ENCODE measurements at regions of chr1 and their contacts with region 1.

Region 1: GRCh38 chr1:22490309-22490708 is 38.7 kb downstream of the ZBTB40 start:
- DNase-seq: no peak
- ATAC-seq: no peak
- H3K4me3 ChIP-seq: no peak overlapping the region
- H3K27ac ChIP-seq: no peak overlapping the region
- H3K4me1 ChIP-seq: peaks cover 0 to 57% (median 38%) of the 10 kb centered on the region in 9 donors
- H3K27me3 ChIP-seq: no peaks in the 10 kb centered on the region
- CTCF ChIP-seq: no peak

Region 2: DNA sequence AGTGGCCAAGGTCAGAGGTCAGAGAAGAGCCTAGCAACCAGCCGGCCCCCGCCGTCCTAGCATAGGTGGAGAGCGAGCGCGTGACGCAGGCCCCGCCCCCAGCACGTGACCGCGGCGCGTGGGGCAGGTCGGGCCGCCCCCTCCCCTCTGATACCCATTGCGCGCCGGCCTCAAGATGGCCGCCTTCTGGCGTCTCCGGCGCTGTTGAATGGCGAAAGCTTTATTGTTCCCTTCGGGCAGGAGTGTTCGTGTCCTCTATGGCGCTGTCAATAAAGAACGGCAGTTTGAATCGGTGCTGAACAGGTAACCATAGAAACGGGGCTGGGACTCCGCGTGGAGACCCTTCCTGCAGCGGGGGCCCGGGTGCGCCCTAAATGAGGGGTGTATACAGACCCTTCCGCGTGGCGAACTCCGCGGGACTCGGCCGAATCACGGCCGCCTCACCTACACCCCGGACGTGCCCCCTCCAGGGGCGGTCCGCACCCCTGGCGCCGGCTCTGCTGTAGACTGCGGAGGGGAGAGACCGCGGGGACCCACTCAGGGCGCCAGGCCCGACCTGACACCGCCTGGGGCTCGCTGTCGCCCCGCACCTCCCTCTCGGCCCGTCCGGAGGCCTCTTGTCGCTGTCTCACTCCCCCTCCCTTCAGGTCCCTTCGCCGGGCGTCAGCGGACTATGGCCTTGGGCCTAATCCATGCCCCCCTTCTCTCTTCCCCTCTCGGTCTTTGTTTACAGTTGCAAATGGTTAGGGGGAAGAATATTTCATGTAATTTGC is 38.4 kb before region 1 on chr1 and contains the start of gene ZBTB40:
- intact Hi-C with region 1: loop called in 2 of 10 experiments (anchors 5 kb)
- DNase-seq: peak; percentile 96 to 98
- ATAC-seq: peak; percentile 96 to 99 (median 98)
- H3K4me3 ChIP-seq: peak within 1 kb of the TSS; percentile 64 to 99 (median 92)
- H3K27ac ChIP-seq: peak within 1 kb of the TSS; percentile 77 to 99 (median 97)
- H3K4me1 ChIP-seq: peaks cover 3 to 63% (median 38%) of the 10 kb centered on the region in 9 donors
- H3K27me3 ChIP-seq: no peaks in the 10 kb centered on the region
- CTCF ChIP-seq: peak in 2 of 9 donors; percentile 2 to 4
- total RNA-seq, gene ZBTB40: 8.5 to 18.2 (median 14.2) TPM

Region 3: DNA sequence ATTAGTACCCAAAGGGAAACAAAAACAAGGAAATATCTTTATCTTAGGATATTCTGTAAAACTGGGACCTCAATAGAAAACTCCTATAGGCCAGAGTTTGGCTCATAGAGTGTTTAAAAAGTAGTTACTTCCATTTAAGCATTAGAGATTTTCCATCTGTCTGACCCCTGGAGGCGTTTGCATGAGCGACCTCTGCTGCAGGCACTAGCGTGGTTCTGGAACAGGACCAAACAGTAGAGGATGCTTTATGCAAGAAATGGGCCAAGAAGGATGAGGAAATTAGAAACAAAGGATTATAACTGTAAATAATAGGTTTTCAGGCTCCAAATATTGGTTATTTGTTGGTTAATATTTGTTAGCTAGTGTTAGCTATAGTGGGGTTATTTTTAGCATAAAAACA is 33.0 kb before region 1 on chr1:
- intact Hi-C with region 1: loop called in 2 of 10 experiments (anchors 5 kb)
- DNase-seq: no peak
- ATAC-seq: peak in 1 of 8 donors; percentile 32
- H3K4me3 ChIP-seq: no peak overlapping the region
- H3K27ac ChIP-seq: peak overlapping the region in 4 of 10 donors; percentile 3 to 31 (median 22)
- H3K4me1 ChIP-seq: peaks cover 3 to 78% (median 39%) of the 10 kb centered on the region in 9 donors
- H3K27me3 ChIP-seq: no peaks in the 10 kb centered on the region
- CTCF ChIP-seq: peak in 6 of 9 donors; percentile 10 to 40 (median 24)

Region 4: GRCh38 chr1:22592919-22593790 is 102.8 kb after region 1 on chr1:
- intact Hi-C with region 1: no loop called
- DNase-seq: no peak
- ATAC-seq: no peak
- H3K4me3 ChIP-seq: no peak overlapping the region
- H3K27ac ChIP-seq: no peak overlapping the region
- H3K4me1 ChIP-seq: no peaks in the 10 kb centered on the region
- H3K27me3 ChIP-seq: peaks cover 0 to 63% (median 49%) of the 10 kb centered on the region in 7 donors
- CTCF ChIP-seq: no peak